ENCODE measurements at regions of chr2 and their contacts with region 1.

Region 1: DNA sequence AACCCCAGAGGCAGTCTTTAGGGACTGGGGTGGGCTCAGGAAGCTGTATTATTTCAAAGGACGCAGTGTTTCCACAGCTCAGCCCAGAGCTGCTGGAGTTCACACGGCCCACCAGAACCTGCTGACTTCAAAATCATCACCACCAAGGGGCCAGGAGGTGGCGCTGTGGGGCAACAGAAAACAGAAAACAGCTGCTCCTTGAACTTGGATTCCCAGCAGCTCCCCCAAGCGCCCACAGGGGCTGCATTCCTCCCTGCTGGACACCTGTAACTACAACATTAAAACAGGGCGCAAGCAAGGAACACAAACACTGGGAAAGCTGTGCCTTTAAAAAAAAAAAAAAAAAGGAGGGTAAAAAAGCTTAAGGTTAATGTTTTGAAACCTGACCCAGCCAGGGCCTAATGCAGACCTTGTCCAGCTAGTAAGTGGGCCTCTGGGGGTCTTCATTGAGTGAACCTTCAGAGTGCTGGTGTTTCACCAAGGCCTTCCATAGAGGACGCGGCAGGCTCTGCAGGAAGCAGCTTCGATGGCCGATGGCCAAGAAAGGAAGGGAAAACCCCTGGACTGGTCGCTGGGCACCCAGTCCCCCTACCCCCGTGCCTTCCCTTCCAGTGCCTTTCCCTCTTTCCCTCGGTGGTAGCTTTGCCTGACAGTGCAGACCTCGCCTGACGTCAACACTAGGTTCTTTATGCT is 25.9 kb downstream of the MLPH start:
- DNase-seq: peak; percentile 64 to 74 (median 70)
- H3K4me3 ChIP-seq: no peak overlapping the region
- H3K4me3 Mint-ChIP-seq: no peak overlapping the region
- H3K27ac ChIP-seq: no peak overlapping the region
- H3K27ac Mint-ChIP-seq: no peak overlapping the region
- H3K4me1 ChIP-seq: no peaks in the 10 kb centered on the region
- H3K4me1 Mint-ChIP-seq: no peaks in the 10 kb centered on the region
- H3K27me3 ChIP-seq: no peaks in the 10 kb centered on the region
- H3K27me3 Mint-ChIP-seq: peaks cover 0 to 3% of the 10 kb centered on the region in 2 donors

Region 2: DNA sequence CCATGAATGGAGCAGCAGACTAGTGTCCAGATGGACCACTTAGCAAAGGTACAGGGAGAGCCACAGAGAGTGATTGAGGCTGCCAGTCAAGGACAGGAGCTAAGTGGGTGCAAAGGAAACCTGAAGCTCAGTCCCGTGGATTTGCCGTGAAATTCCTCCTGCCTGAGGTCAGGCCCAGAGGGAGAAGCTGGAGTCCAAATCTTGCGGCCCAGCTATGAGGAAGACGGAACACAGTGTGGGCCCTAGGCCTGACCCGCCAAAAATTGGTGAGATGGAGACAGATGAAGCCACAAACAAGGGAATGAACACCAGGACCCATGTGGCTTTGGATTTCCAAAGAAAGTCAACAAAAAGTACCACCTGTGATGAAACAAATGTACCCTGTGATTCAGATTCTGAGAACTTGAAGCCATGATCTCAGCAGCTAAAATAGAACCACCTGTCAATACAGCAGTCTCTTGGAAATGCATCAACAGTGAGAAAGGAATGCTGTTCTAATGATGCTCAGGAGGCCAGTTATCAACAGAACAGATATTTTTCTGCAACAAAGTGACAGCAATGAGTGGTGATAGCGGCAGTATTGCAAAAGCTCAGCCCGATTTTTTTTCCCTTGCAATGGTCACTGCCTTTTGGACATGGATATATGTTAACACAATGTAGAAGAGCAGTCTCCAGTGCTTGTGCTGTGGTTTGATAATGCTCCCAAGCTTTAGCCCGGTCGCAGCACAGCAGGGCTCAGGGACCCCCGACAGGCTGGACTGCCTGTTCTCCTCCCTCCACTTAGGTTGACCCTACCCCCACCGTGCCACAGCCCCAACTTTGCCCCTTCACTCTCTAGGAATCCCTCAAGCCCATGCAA is 109.7 kb before region 1 on chr2:
- CTCF ChIA-PET with region 1: no interaction called
- POLR2A ChIA-PET with region 1: no interaction called
- intact Hi-C with region 1: no loop called
- DNase-seq: no peak
- H3K4me3 ChIP-seq: no peak overlapping the region
- H3K4me3 Mint-ChIP-seq: no peak overlapping the region
- H3K27ac ChIP-seq: no peak overlapping the region
- H3K27ac Mint-ChIP-seq: no peak overlapping the region
- H3K4me1 ChIP-seq: no peaks in the 10 kb centered on the region
- H3K4me1 Mint-ChIP-seq: no peaks in the 10 kb centered on the region
- H3K27me3 ChIP-seq: no peaks in the 10 kb centered on the region
- H3K27me3 Mint-ChIP-seq: no peaks in the 10 kb centered on the region

Region 3: GRCh38 chr2:237456200-237456843 is 56.6 kb before region 1 on chr2:
- CTCF ChIA-PET with region 1: no interaction called
- POLR2A ChIA-PET with region 1: no interaction called
- intact Hi-C with region 1: no loop called
- DNase-seq: no peak
- H3K4me3 ChIP-seq: no peak overlapping the region
- H3K4me3 Mint-ChIP-seq: no peak overlapping the region
- H3K27ac ChIP-seq: no peak overlapping the region
- H3K27ac Mint-ChIP-seq: no peak overlapping the region
- H3K4me1 ChIP-seq: no peaks in the 10 kb centered on the region
- H3K4me1 Mint-ChIP-seq: peaks cover 0 to 9% (median 3%) of the 10 kb centered on the region in 4 donors
- H3K27me3 ChIP-seq: no peaks in the 10 kb centered on the region
- H3K27me3 Mint-ChIP-seq: peaks cover 0 to 1% of the 10 kb centered on the region in 2 donors

Region 4: GRCh38 chr2:237500681-237501424 is 12.1 kb before region 1 on chr2:
- CTCF ChIA-PET with region 1: interaction called, 16 read pairs
- POLR2A ChIA-PET with region 1: no interaction called
- intact Hi-C with region 1: no loop called
- DNase-seq: no peak
- H3K4me3 ChIP-seq: no peak overlapping the region
- H3K4me3 Mint-ChIP-seq: no peak overlapping the region
- H3K27ac ChIP-seq: no peak overlapping the region
- H3K27ac Mint-ChIP-seq: no peak overlapping the region
- H3K4me1 ChIP-seq: no peaks in the 10 kb centered on the region
- H3K4me1 Mint-ChIP-seq: no peaks in the 10 kb centered on the region
- H3K27me3 ChIP-seq: peaks cover 4% of the 10 kb centered on the region
- H3K27me3 Mint-ChIP-seq: peaks cover 14 to 36% of the 10 kb centered on the region in 2 donors

Region 5: DNA sequence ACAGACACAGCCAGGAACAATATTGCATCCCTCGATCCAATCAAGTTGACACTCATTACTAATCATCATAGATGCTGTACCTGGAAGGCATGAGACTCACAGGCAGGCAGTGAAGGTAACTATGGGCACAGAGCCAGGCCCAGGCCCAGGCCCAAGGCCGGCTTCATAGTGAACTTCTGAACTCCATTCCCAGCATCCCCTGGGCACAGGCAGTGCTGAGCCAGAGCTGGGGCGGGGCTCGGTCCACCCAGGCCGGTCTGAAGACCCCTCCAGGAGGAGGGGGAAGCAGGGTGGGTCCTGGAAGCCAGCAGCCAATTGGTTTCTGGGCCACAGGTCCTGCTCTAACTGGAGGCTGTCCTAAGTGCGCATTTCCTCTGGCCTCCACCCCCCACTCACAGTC is 11.7 kb after region 1 on chr2:
- CTCF ChIA-PET with region 1: interaction called, 12 read pairs
- POLR2A ChIA-PET with region 1: no interaction called
- intact Hi-C with region 1: no loop called
- DNase-seq: no peak
- H3K4me3 ChIP-seq: no peak overlapping the region
- H3K4me3 Mint-ChIP-seq: no peak overlapping the region
- H3K27ac ChIP-seq: no peak overlapping the region
- H3K27ac Mint-ChIP-seq: no peak overlapping the region
- H3K4me1 ChIP-seq: no peaks in the 10 kb centered on the region
- H3K4me1 Mint-ChIP-seq: peaks cover 0 to 3% (median 0%) of the 10 kb centered on the region in 4 donors
- H3K27me3 ChIP-seq: no peaks in the 10 kb centered on the region
- H3K27me3 Mint-ChIP-seq: no peaks in the 10 kb centered on the region

Region 6: DNA sequence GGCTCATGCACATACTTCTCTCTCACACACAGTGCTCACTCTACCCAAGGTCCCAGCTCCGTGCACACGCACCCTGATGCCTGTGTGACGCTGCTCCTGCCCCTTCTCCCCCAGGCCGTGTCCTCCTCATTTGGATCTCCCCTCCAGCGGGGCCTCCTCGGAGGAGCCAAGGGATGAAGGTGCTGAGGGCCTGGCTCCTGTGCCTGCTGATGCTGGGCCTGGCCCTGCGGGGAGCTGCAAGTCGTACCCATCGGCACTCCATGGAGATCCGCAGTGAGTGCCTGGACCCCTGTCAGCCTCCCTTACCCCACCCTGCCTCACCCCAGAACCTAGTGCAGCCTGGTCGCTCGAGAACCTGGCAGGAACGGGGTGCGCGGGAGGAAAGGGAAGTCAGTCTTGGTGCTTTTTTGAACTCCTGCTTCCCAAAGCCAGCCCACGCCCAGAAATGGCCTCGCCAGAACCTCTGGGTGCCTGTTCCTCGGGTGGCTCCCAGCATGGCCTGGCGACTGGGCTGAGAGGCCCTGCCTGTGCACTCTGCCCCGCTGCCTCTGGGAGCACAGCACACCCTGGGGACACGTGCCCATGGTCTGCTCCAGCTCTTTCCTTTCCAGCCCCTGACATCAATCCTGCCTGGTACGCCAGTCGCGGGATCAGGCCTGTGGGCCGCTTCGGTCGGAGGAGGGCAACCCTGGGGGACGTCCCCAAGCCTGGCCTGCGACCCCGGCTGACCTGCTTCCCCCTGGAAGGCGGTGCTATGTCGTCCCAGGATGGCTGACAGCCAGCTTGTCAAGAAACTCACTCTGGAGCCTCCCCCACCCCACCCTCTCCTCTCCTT is 53.7 kb after region 1 on chr2 and contains the start of gene PRLH:
- CTCF ChIA-PET with region 1: interaction called, 158 read pairs
- POLR2A ChIA-PET with region 1: no interaction called
- intact Hi-C with region 1: no loop called
- DNase-seq: no peak
- H3K4me3 ChIP-seq: no peak within 1 kb of the TSS
- H3K4me3 Mint-ChIP-seq: no peak within 1 kb of the TSS
- H3K27ac ChIP-seq: no peak within 1 kb of the TSS
- H3K27ac Mint-ChIP-seq: no peak within 1 kb of the TSS
- H3K4me1 ChIP-seq: no peaks in the 10 kb centered on the region
- H3K4me1 Mint-ChIP-seq: peaks cover 0 to under 1% (median 0%) of the 10 kb centered on the region in 4 donors
- H3K27me3 ChIP-seq: no peaks in the 10 kb centered on the region
- H3K27me3 Mint-ChIP-seq: peaks cover 6 to 7% of the 10 kb centered on the region in 2 donors
- total RNA-seq, gene PRLH: not detected

Region 7: GRCh38 chr2:237627441-237628246 is 114.7 kb after region 1 on chr2 and contains the start of gene LRRFIP1:
- CTCF ChIA-PET with region 1: no interaction called
- POLR2A ChIA-PET with region 1: no interaction called
- intact Hi-C with region 1: no loop called
- DNase-seq: no peak
- H3K4me3 ChIP-seq: no peak within 1 kb of the TSS
- H3K4me3 Mint-ChIP-seq: peak within 1 kb of the TSS; percentile 85 to 91 (median 88)
- H3K27ac ChIP-seq: no peak within 1 kb of the TSS
- H3K27ac Mint-ChIP-seq: peak within 1 kb of the TSS in 6 of 7 donors; percentile 72 to 91 (median 84)
- H3K4me1 ChIP-seq: peaks cover 6% of the 10 kb centered on the region
- H3K4me1 Mint-ChIP-seq: peaks cover 8 to 33% (median 18%) of the 10 kb centered on the region in 4 donors
- H3K27me3 ChIP-seq: no peaks in the 10 kb centered on the region
- H3K27me3 Mint-ChIP-seq: peaks cover 20 to 32% of the 10 kb centered on the region in 2 donors
- total RNA-seq, gene LRRFIP1: 114 to 119 TPM

Region 8: GRCh38 chr2:237700512-237701032 is 187.7 kb after region 1 on chr2:
- CTCF ChIA-PET with region 1: no interaction called
- POLR2A ChIA-PET with region 1: no interaction called
- intact Hi-C with region 1: no loop called
- DNase-seq: peak; percentile 60 to 94 (median 66)
- H3K4me3 ChIP-seq: no peak overlapping the region
- H3K4me3 Mint-ChIP-seq: peak overlapping the region; percentile 61 to 93 (median 82)
- H3K27ac ChIP-seq: peak overlapping the region; percentile 70
- H3K27ac Mint-ChIP-seq: peak overlapping the region; percentile 90 to 96 (median 96)
- H3K4me1 ChIP-seq: peaks cover 100% of the 10 kb centered on the region
- H3K4me1 Mint-ChIP-seq: peaks cover 76 to 100% (median 93%) of the 10 kb centered on the region in 4 donors
- H3K27me3 ChIP-seq: no peaks in the 10 kb centered on the region
- H3K27me3 Mint-ChIP-seq: no peaks in the 10 kb centered on the region

Region 9: DNA sequence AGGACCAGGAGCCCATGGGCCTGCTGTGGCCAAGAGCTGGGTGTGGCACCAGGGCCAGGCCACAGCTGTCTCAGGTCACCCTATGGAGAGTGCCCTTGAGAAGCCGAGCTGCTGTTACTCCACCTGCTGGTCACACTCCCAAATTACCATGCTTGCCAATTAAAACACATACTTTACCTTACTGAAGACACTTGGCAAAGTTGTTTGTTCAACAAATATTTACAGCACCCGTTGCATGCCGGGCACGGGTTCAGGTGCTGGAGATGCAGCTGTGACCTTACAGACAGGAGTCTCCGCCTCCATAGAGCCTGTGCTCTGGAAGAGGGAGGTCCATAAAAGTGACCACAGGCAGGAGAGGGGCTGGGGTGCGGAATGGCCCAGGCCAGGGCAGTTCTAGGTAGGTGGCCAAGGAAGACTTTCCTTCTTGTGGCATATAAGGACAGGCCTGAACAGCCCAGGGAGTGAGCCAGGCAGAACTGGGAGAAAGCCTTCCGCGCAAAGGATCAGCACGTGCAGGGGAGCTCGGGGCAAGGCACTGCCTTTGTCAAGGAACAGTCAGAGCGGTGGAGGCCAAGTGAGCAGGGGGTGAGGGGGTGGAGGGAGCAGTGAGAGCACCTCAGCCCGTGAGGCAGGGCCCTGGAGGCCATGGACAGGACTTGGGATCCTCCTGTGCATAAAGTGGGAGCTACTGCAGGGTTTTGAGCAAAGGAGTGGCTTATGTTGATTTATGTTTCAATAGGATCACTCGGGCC is 262.1 kb after region 1 on chr2:
- CTCF ChIA-PET with region 1: interaction called, 15 read pairs
- POLR2A ChIA-PET with region 1: no interaction called
- intact Hi-C with region 1: no loop called
- DNase-seq: peak in 3 of 5 donors; percentile 16 to 21 (median 17)
- H3K4me3 ChIP-seq: no peak overlapping the region
- H3K4me3 Mint-ChIP-seq: no peak overlapping the region
- H3K27ac ChIP-seq: no peak overlapping the region
- H3K27ac Mint-ChIP-seq: peak overlapping the region in 3 of 7 donors; percentile 66 to 83 (median 72)
- H3K4me1 ChIP-seq: no peaks in the 10 kb centered on the region
- H3K4me1 Mint-ChIP-seq: peaks cover 0 to 5% (median 0%) of the 10 kb centered on the region in 4 donors
- H3K27me3 ChIP-seq: no peaks in the 10 kb centered on the region
- H3K27me3 Mint-ChIP-seq: no peaks in the 10 kb centered on the region